HEK293 (cell line): ENCODE measurements at regions of chr17 and their contacts with region 1.

Region 1: GRCh38 chr17:45172454-45173286 is 11.0 kb downstream of the HEXIM2 start:
- H3K4me3 ChIP-seq: no peak overlapping the region
- H3K27ac ChIP-seq: peak overlapping the region; percentile 34
- H3K4me1 ChIP-seq: peaks cover 23% of the 10 kb centered on the region
- CTCF ChIP-seq: 0 out of 2 replicates have a peak, but pooled peaks have one; percentile 41

Region 2: GRCh38 chr17:45092932-45093430 is 79.7 kb before region 1 on chr17:
- CTCF ChIA-PET with region 1: no interaction called
- POLR2A ChIA-PET with region 1: no interaction called
- H3K4me3 ChIP-seq: no peak overlapping the region
- H3K27ac ChIP-seq: no peak overlapping the region
- H3K4me1 ChIP-seq: no peaks in the 10 kb centered on the region
- CTCF ChIP-seq: no peak

Region 3: DNA sequence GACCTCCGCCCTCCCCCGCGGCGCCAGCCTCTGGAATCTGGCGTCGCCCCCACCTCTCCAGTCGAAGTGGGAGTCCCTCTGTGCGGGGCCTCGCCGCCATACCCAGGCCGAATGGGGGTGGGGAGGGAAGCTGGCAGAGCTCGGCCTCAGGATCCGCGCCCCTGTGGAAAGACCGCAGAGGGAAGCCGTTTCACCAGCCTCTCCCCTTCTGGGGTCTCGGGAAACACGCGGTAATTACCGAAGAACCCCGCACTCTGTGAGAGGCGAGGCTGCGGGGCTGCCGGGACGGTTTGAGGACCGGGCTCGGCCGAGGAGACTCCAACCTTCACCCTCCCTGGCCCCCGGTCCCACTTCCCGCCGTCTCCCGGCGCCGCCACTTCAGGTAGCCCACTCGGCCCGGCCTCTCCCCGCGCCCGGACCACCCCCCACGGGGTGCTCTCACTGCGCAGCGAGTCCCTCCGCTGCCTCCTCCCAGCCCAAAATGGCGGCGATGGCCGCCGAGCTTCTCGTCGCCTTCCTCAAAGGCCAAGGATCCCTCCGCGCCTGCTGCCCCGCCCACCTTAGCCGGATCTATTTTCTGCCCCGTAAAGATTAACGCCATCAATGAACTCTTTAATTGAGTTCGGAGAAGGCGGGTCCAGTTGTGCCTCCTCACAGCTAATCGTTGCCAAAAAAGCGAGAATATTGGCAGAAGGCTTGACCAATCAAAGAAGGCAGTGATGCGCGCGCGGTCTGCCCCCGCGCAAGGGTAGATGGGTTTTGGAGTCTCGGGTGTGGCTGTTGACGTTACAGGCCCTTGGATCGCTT is 11.4 kb before region 1 on chr17:
- CTCF ChIA-PET with region 1: interaction called, 13 read pairs
- POLR2A ChIA-PET with region 1: interaction called, 65 read pairs
- H3K4me3 ChIP-seq: peak overlapping the region; percentile 97
- H3K27ac ChIP-seq: peak overlapping the region; percentile 92
- H3K4me1 ChIP-seq: peaks cover 15% of the 10 kb centered on the region
- CTCF ChIP-seq: no peak

Region 4: DNA sequence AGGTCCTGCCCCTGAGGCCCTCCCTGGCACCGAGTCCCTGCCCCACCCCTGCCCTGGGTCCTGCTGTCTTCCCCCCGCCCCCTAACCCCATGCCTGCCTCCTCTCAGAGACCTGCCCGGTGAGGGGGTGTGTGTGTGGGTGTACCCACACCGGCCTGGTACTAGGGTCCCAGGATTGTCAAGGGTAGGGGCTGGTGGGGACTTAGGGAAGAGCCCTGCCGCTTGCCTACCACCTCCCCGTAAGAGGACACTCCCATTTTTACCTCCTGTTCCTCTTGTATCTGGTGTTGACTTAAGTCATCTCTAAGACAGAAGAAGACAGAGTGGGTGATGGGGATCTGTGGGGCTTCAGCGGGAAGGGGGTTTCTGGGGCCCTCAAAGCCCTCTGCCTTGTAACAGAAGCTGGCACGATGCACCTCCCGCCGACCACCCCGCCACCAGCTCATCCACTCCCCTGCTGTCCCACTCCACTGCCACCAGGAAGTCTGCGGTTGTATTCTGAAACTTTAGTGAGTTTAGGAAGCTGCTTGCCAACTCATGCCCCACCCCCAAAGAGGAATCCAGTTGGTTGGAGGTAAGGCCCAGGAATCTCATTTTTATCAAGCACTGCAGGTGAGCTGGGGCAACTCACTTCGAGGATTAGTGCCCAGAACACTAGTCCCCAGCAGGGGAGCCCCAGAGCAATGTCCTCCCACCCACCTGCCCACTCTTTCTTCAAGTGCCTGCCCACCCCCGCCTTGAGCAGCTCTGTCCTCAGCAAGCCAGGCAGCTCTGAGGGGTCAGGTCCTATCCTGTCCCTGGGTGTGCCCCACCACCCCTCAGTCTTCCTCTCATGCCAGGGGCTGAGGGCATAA is 83.7 kb after region 1 on chr17:
- CTCF ChIA-PET with region 1: no interaction called
- POLR2A ChIA-PET with region 1: no interaction called
- H3K4me3 ChIP-seq: no peak overlapping the region
- H3K27ac ChIP-seq: no peak overlapping the region
- H3K4me1 ChIP-seq: no peaks in the 10 kb centered on the region
- CTCF ChIP-seq: no peak